Activated naive CD4-positive, alpha-beta T cell treated with anti-CD3 and anti-CD28 coated beads for 36 hours (primary cell): ENCODE measurements at regions of chr4 and their contacts with region 1.

Region 1: DNA sequence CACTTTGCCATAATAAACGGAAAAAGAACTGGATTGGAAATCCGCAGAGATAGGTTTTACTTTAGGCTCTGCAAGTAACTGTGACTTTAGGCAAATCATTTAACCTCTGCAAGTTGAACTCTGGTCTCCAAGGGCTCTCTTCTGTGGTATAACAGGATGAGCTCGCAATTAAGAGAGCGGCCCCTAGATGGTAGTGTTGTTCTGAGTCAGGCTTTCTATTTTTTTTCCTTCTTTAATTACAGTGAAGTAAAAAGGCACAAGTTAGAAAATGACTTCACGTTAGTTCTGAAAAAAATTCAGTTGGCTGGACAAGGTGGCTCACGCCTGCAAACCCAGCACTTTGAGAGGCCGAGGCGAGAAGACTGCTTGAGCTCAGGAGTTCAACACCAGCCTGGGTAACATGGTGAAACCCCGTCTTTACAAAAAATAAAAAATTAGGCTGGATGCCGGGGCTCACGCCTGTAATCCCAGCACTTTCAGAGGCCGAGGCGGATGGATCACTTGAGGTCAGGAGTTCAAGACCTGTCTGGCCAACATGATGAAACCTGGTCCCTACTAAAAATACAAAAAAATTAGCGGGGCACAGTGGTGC is 18.0 kb downstream of the RPS3A start:
- DNase-seq: peak; percentile 77
- H3K4me3 Mint-ChIP-seq: no peak overlapping the region
- H3K27ac Mint-ChIP-seq: no peak overlapping the region
- H3K4me1 Mint-ChIP-seq: peaks cover 3% of the 10 kb centered on the region
- H3K27me3 Mint-ChIP-seq: no peaks in the 10 kb centered on the region

Region 2: DNA sequence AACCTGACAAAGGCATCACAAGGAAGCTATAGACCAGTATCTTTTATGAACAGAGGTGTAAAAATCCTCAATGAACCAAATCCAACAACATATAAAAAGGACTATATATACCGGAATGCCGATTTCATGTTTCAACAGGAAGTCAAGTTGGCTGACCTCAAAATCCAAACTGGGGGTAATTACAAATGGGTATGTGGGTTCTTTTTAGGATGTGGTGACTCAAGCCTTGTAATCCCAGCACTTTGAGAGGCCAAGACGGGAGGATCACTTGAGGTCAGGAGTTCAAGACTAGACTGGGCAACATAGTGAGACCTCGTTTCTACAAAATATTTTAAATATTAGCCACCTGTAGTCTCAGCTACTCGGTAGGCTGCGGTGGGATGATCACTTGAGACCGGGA is 169.9 kb after region 1 on chr4:
- CTCF ChIA-PET with region 1: no interaction called
- intact Hi-C with region 1: no loop called
- DNase-seq: no peak
- H3K4me3 Mint-ChIP-seq: no peak overlapping the region
- H3K27ac Mint-ChIP-seq: no peak overlapping the region
- H3K4me1 Mint-ChIP-seq: no peaks in the 10 kb centered on the region
- H3K27me3 Mint-ChIP-seq: peaks cover 9% of the 10 kb centered on the region

Region 3: GRCh38 chr4:151362404-151363164 is 245.1 kb after region 1 on chr4:
- CTCF ChIA-PET with region 1: interaction called, 3 read pairs
- intact Hi-C with region 1: loop called (anchors 1 kb)
- DNase-seq: peak; percentile 90
- H3K4me3 Mint-ChIP-seq: no peak overlapping the region
- H3K27ac Mint-ChIP-seq: no peak overlapping the region
- H3K4me1 Mint-ChIP-seq: no peaks in the 10 kb centered on the region
- H3K27me3 Mint-ChIP-seq: no peaks in the 10 kb centered on the region

Region 4: DNA sequence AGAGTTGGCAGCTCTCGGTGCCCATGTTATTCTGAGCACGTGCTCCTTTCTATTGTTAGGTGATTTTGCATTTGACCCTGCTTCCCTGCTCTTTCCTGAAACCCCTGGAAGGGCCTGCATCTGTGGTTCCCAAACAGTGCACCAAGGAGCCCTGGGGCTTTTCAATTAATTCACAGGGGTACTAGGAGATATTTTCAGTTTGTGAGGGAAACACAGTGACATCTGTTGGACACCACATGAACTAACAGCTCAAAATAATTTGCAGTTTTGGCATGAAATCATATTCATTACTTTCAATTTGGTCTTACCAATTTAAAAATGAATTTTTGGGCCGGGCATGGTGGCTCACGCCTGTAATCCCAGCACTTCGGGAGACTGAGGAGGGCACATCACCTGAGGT is 486.8 kb after region 1 on chr4:
- CTCF ChIA-PET with region 1: interaction called, 7 read pairs
- intact Hi-C with region 1: loop called (anchors 2 kb)
- DNase-seq: no peak
- H3K4me3 Mint-ChIP-seq: no peak overlapping the region
- H3K27ac Mint-ChIP-seq: no peak overlapping the region
- H3K4me1 Mint-ChIP-seq: no peaks in the 10 kb centered on the region
- H3K27me3 Mint-ChIP-seq: no peaks in the 10 kb centered on the region

Region 5: DNA sequence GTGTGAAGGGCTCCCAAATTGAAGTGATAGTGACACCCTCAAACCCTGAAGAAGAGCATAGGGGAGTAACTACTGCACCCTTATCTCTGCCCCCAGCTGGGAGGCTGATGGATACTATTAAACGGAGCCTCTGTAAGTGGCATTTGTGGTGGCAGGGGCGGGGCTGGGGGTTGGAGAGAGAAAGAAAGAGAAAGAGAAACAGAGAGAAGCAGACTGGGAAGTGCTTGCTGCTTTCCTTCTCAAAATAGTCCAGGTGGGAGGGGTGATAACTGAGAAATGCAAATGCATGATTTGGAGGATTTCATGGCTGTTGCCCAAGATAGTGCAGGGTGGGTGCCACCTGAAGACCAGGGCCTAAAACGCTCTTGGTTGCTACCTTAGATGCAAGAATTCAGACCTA is 896.8 kb after region 1 on chr4:
- CTCF ChIA-PET with region 1: no interaction called
- intact Hi-C with region 1: loop called (anchors 10 kb)
- DNase-seq: peak; percentile 81
- H3K4me3 Mint-ChIP-seq: no peak overlapping the region
- H3K27ac Mint-ChIP-seq: no peak overlapping the region
- H3K4me1 Mint-ChIP-seq: peaks cover 49% of the 10 kb centered on the region
- H3K27me3 Mint-ChIP-seq: no peaks in the 10 kb centered on the region